ENCODE measurements at regions of chr16 and their contacts with region 1.

Region 1: GRCh38 chr16:47460711-47461597 is at the starts of genes ITFG1 and PHKB:
- DNase-seq: peak; percentile 79 to 87 (median 82)
- H3K4me3 ChIP-seq: peak within 1 kb of the TSS; percentile 86 to 99 (median 90)
- H3K4me3 Mint-ChIP-seq: peak within 1 kb of the TSS; percentile 97 to 100
- H3K27ac ChIP-seq: peak within 1 kb of the TSS; percentile 96 to 98
- H3K27ac Mint-ChIP-seq: peak within 1 kb of the TSS; percentile 96 to 99 (median 97)
- H3K4me1 ChIP-seq: peaks cover 18 to 30% of the 10 kb centered on the region in 2 donors
- H3K4me1 Mint-ChIP-seq: peaks cover 52% of the 10 kb centered on the region
- H3K27me3 ChIP-seq: no peaks in the 10 kb centered on the region
- H3K27me3 Mint-ChIP-seq: peaks cover 0 to 1% (median 0%) of the 10 kb centered on the region in 3 donors
- CTCF ChIP-seq: no peak
- polyA plus RNA-seq, gene ITFG1: 28.9 to 62.5 (median 35.3) TPM
- polyA plus RNA-seq, gene PHKB: 49.8 to 53.1 (median 50.8) TPM

Region 2: DNA sequence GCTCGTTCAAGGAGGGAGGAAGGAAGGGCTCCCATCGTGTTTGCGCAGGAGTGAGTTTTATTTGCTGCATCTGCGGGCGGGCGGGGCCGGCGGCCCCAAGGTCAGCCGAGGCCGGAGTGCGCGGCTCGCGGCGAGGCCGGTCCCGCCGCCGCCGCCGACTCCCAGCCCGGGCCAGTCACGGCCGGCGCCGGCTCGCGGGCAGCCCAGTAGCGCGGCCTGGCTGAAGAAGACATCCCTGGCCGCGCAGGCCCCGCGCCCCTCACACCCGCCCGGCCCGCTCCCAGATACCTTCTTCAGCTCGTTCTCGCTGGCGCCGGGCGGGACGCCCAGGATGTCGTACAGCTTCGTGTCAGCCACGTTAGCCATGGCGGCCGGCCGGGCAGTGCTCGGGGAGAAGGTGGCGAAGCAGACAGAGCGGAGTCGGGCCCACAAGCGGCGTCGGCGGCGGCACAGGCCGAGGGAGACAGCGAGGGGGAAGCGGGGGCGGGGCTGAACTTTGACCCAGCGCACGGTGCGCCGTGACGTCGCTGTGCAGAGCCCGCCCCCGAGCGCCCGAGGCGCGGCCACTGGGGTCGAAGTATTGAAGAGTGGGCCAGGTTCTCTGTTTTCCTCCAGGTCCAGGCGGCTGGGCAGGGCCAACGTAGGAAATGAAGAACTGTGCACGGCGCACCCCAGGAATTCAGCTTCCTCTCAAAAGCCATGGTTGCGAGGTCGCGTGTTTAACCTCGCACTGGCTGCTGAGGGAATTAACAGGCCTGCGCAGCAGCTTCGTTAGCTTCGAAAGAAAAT is 487.6 kb before region 1 on chr16 and contains the start of gene DNAJA2:
- intact Hi-C with region 1: loop called in 1 of 2 experiments (anchors 10 kb)
- DNase-seq: peak; percentile 91 to 95 (median 93)
- H3K4me3 ChIP-seq: peak within 1 kb of the TSS; percentile 76 to 94 (median 77)
- H3K4me3 Mint-ChIP-seq: peak within 1 kb of the TSS; percentile 92 to 93
- H3K27ac ChIP-seq: peak within 1 kb of the TSS; percentile 92 to 94
- H3K27ac Mint-ChIP-seq: peak within 1 kb of the TSS; percentile 95 to 99 (median 98)
- H3K4me1 ChIP-seq: peaks cover 18 to 25% of the 10 kb centered on the region in 2 donors
- H3K4me1 Mint-ChIP-seq: peaks cover 25% of the 10 kb centered on the region
- H3K27me3 ChIP-seq: no peaks in the 10 kb centered on the region
- H3K27me3 Mint-ChIP-seq: peaks cover 0 to 2% (median 0%) of the 10 kb centered on the region in 3 donors
- CTCF ChIP-seq: no peak
- polyA plus RNA-seq, gene DNAJA2: 14.4 to 63.4 (median 62.9) TPM

Measured in CD14-positive monocyte (primary cell).